ENCODE measurements at regions of chr5 and their contacts with region 1.

Region 1: DNA sequence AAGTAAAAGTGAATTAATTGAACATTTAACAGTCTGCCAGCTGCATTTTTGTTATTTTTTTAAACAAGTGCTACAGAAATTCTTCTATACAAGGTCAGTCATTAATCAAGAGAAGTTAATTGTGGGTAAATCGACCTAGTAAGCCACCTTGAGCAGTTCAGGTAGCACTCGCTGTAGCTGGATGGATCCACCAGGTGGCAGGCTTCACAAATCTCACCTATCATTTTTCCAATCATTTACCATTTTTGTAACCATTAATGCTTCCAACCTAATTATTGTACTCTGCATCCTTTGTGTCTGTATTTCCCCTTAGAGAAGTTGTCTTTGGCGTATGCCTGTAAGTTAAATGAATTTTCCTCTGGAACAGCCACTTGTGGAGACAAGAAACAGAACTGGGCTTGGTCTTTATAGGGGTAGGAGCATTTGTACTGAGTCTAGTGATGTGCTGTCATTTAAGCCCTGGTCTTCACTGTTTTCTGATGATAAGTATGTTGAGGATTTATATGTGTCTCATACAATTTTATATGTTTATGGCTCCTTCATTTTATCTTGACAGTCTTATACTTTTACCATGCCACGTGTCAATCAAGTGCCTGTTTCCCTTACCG is 39.5 kb downstream of the CD180 start:
- DNase-seq: peak; percentile 76
- H3K4me3 ChIP-seq: no peak overlapping the region
- H3K27ac ChIP-seq: no peak overlapping the region
- H3K4me1 ChIP-seq: peaks cover 0 to 45% (median 3%) of the 10 kb centered on the region in 6 donors
- H3K27me3 ChIP-seq: no peaks in the 10 kb centered on the region
- CTCF ChIP-seq: peak; percentile 56 to 90 (median 82)
- POLR2A ChIP-seq: no peak

Region 2: DNA sequence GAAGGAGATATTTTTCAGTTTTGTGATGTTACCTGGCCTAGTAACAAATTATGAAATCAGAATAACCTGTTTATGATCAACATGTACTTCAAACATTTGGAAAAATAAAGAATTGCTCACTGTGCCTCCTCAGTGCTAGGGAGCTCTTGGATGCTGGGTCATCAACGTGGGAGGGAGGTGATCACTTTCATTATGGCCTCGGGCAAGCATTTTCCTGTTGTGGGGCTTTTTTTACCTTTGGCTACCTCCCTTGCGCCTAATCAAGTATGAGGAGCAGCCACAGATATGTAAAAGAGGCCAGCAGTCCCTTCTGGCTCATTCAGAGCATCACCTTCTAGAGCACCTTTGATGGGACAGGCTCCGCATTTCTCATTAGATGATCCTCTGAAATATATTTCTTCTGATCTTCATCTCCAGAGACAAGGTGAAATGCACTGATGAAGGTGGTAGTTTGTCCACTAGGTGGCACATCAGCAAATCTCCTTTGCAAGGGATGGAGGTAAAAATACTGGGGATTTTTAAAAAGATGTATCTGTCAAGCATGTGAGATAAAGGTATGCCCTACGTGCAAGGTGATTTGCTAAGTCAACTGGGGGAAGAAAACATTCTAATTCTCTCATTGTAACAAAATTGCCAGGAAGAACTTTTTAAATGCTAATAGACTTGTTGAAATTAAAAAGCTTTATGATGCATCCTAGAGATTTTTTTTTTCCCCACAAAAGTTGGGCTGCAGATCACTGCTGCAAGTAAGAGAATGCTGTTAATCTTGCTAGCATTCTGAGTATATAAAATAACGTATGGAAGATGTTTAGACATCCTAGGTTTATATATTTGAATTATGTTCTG is 342.7 kb before region 1 on chr5:
- intact Hi-C with region 1: loop called (anchors 10 kb)
- DNase-seq: no peak
- H3K4me3 ChIP-seq: no peak overlapping the region
- H3K27ac ChIP-seq: no peak overlapping the region
- H3K4me1 ChIP-seq: peaks cover 0 to 15% (median 2%) of the 10 kb centered on the region in 6 donors
- H3K27me3 ChIP-seq: peaks cover 0 to 12% (median 0%) of the 10 kb centered on the region in 7 donors
- CTCF ChIP-seq: peak; percentile 21 to 79 (median 65)
- POLR2A ChIP-seq: no peak

Region 3: GRCh38 chr5:66987949-66988838 is 168.9 kb before region 1 on chr5:
- intact Hi-C with region 1: loop called (anchors 10 kb)
- DNase-seq: no peak
- H3K4me3 ChIP-seq: no peak overlapping the region
- H3K27ac ChIP-seq: no peak overlapping the region
- H3K4me1 ChIP-seq: peaks cover 0 to 5% (median 0%) of the 10 kb centered on the region in 6 donors
- H3K27me3 ChIP-seq: no peaks in the 10 kb centered on the region
- CTCF ChIP-seq: peak; percentile 53 to 87 (median 82)
- POLR2A ChIP-seq: no peak

Region 4: DNA sequence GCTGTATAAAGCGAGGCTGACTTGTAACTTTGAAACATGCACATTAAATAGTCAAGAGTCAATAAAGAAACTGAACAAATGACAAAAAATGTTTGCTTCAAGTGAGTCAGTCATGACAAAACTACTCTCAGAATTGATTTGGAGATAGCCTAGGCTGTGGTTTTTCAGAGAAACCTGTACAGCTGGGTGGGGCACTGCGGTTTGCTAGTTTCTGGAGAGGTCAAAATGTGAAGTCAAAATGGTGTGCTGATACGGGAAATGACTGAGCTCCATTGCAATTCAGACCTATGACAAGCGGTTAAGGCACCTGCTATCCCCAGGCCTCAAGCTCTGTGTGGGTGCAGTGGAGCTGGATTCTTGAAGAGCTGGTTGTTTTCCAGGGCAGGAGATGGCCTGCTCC is 49.9 kb after region 1 on chr5:
- intact Hi-C with region 1: no loop called
- DNase-seq: peak; percentile 89
- H3K4me3 ChIP-seq: peak overlapping the region in 1 of 8 donors; percentile 31
- H3K27ac ChIP-seq: peak overlapping the region; percentile 66 to 93 (median 88)
- H3K4me1 ChIP-seq: peaks cover 23 to 80% (median 74%) of the 10 kb centered on the region in 6 donors
- H3K27me3 ChIP-seq: no peaks in the 10 kb centered on the region
- CTCF ChIP-seq: no peak
- POLR2A ChIP-seq: no peak

Measured in spleen (tissue), 13 donors.